Left ventricle myocardium inferior (tissue), 1 donor: ENCODE measurements at regions of chr1 and their contacts with region 1.

Region 1: DNA sequence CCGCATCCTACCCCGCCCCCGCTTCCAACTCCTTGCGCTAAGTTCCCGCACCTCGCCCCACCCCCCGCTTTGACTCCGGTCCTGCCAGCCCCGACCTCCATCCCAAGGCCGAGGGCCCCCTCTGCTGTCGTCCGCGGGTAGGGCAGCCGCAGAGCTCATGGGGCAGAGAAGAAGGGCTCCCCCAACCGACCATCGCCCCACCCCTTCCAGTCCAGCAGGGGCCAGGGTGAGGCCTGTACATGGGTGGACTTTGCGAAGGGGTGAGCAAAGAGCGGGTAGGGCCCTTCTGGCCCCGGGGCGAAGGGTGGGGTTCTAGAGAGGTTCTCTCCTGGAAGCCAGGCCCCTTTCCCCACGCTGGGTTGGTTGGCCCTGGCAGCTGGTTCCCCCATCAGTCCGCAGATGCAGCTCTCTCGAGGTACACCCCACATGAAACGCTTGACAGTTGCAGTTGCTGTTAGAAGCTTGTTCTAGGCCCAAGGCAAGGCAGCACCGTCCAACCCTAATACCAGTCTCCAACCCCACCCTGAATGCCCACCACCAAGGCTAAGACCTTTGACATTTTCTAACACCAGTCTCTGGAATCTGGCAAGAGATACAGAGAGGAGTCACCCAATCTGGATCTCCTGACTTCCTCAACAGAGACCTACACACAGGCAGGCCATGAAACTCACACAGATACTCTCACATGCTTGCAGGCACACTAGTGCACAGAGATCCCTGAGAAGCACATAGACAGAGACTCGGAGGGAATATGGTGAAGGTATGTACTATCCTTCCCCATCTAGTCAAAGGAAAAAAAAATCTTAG is 25.3 kb upstream of the ADGRB2 start:
- DNase-seq: peak; percentile 96
- H3K4me3 ChIP-seq: peak overlapping the region; percentile 82
- H3K27ac ChIP-seq: peak overlapping the region; percentile 86
- H3K4me1 ChIP-seq: peaks cover 16% of the 10 kb centered on the region
- H3K27me3 ChIP-seq: peaks cover 16% of the 10 kb centered on the region
- CTCF ChIP-seq: peak; percentile 91

Region 2: DNA sequence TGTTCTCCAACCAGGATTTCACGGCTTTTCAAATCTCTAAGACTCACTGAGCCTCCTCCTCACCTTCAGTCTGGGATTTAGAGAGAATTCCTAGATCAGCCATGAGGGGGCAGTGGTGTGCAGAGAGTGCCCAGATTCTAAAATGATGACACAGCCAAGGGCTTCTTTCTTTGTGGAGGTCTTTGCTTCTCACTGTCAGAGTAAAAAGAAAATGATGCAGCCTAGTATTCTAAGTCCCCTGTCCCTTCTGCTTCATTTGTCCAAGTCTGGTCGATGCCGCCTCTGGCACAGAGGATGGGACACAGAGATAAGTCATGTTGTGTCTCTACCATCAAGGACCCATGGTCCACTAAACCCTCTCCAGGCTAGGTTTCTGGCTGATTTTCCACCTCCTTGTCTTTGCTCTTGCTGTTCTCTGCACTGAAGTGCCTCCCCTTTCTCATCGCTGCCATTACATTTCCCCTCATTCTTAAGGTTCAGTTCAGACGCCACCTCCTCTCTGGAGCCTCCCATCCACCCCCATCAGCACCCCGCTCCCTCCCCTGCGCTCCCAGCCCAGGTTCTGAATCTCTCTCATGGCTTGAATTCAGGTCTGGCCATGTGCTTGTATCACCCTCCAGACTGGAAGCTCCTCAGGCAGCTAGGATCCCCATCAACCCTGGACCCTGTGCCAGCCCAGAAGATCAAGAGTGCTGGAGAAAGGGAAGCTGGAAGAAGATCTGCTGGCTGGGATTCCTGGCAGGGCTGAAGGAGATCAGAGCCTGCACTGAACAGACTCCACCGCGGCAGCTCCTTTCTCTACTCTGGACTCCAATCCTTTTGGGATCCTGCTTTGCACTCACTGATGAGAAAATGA is 225.1 kb before region 1 on chr1:
- intact Hi-C with region 1: loop called (anchors 10 kb)
- DNase-seq: no peak
- H3K4me3 ChIP-seq: no peak overlapping the region
- H3K27ac ChIP-seq: peak overlapping the region; percentile 34
- H3K4me1 ChIP-seq: peaks cover 23% of the 10 kb centered on the region
- H3K27me3 ChIP-seq: peaks cover 7% of the 10 kb centered on the region
- CTCF ChIP-seq: peak; percentile 94

Region 3: GRCh38 chr1:31663622-31664452 is 125.6 kb before region 1 on chr1:
- intact Hi-C with region 1: loop called (anchors 2 kb)
- DNase-seq: peak; percentile 58
- H3K4me3 ChIP-seq: no peak overlapping the region
- H3K27ac ChIP-seq: no peak overlapping the region
- H3K4me1 ChIP-seq: peaks cover 20% of the 10 kb centered on the region
- H3K27me3 ChIP-seq: no peaks in the 10 kb centered on the region
- CTCF ChIP-seq: peak; percentile 92

Region 4: GRCh38 chr1:31715087-31715872 is 74.2 kb before region 1 on chr1:
- intact Hi-C with region 1: loop called (anchors 10 kb)
- DNase-seq: peak; percentile 95
- H3K4me3 ChIP-seq: peak overlapping the region; percentile 69
- H3K27ac ChIP-seq: peak overlapping the region; percentile 99
- H3K4me1 ChIP-seq: peaks cover 42% of the 10 kb centered on the region
- H3K27me3 ChIP-seq: peaks cover 4% of the 10 kb centered on the region
- CTCF ChIP-seq: peak; percentile 94